PC-9 (cell line): ENCODE measurements at regions of chr11 and their contacts with region 1.

Region 1: GRCh38 chr11:23749762-23750430 is 747.0 kb upstream of the LUZP2 start:
- DNase-seq: no peak
- H3K4me3 ChIP-seq: no peak overlapping the region
- H3K27ac ChIP-seq: no peak overlapping the region
- H3K4me1 ChIP-seq: no peaks in the 10 kb centered on the region
- H3K27me3 ChIP-seq: no peaks in the 10 kb centered on the region
- CTCF ChIP-seq: no peak

Region 2: GRCh38 chr11:22713336-22713735 is 1036.6 kb before region 1 on chr11:
- CTCF ChIA-PET with region 1: interaction called, 11 read pairs
- POLR2A ChIA-PET with region 1: no interaction called
- intact Hi-C with region 1: no loop called
- DNase-seq: no peak
- H3K4me3 ChIP-seq: no peak overlapping the region
- H3K27ac ChIP-seq: no peak overlapping the region
- H3K4me1 ChIP-seq: no peaks in the 10 kb centered on the region
- H3K27me3 ChIP-seq: no peaks in the 10 kb centered on the region
- CTCF ChIP-seq: no peak